Ascending aorta (tissue), 2 donors: ENCODE measurements at regions of chr10 and their contacts with region 1.

Region 1: GRCh38 chr10:3525832-3526449 is 259.1 kb downstream of the KLF6 start:
- DNase-seq: peak; percentile 39 to 81
- H3K4me3 ChIP-seq: no peak overlapping the region
- H3K27ac ChIP-seq: peak overlapping the region; percentile 38 to 63
- H3K4me1 ChIP-seq: peaks cover 0 to 21% of the 10 kb centered on the region in 2 donors
- H3K27me3 ChIP-seq: no peaks in the 10 kb centered on the region
- CTCF ChIP-seq: no peak

Region 2: GRCh38 chr10:3347413-3348182 is 178.3 kb before region 1 on chr10:
- intact Hi-C with region 1: no loop called
- DNase-seq: no peak
- H3K4me3 ChIP-seq: no peak overlapping the region
- H3K27ac ChIP-seq: no peak overlapping the region
- H3K4me1 ChIP-seq: no peaks in the 10 kb centered on the region
- H3K27me3 ChIP-seq: no peaks in the 10 kb centered on the region
- CTCF ChIP-seq: no peak

Region 3: DNA sequence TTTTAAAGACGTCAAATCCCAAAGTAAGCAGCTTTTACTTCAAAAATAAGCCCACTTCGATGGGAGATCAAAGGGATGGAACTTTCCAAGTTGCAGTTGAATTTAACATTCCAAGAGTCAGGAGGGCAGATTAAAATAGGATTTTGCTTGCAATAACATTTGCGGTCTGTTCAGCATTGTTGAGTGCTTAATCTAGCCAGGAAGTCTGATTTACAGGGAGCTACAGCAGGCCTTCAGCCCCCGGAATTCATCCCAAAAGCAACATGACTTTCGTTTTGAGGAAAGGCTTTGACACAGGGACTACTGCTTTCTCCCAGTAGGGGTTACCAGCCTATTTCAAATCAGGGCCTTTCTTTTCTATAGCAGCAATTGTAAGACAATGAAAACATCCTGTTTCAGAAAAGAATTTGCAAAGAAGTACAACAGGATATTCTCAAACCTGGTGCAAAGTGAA is 73.7 kb before region 1 on chr10:
- intact Hi-C with region 1: loop called (anchors 5 kb)
- DNase-seq: peak in 1 of 2 donors; percentile 71
- H3K4me3 ChIP-seq: peak overlapping the region in 1 of 2 donors; percentile 3
- H3K27ac ChIP-seq: peak overlapping the region; percentile 76 to 80
- H3K4me1 ChIP-seq: peaks cover 4 to 15% of the 10 kb centered on the region in 2 donors
- H3K27me3 ChIP-seq: no peaks in the 10 kb centered on the region
- CTCF ChIP-seq: peak; percentile 35 to 49 (median 49)

Region 4: GRCh38 chr10:3467052-3467951 is 58.6 kb before region 1 on chr10:
- intact Hi-C with region 1: loop called (anchors 5 kb)
- DNase-seq: peak; percentile 39 to 84
- H3K4me3 ChIP-seq: peak overlapping the region in 1 of 2 donors; percentile 34
- H3K27ac ChIP-seq: peak overlapping the region; percentile 69 to 91
- H3K4me1 ChIP-seq: peaks cover 0 to 30% of the 10 kb centered on the region in 2 donors
- H3K27me3 ChIP-seq: no peaks in the 10 kb centered on the region
- CTCF ChIP-seq: peak in 2 of 3 experiments; percentile 21 to 36

Region 5: GRCh38 chr10:3494131-3494837 is 31.7 kb before region 1 on chr10:
- intact Hi-C with region 1: loop called (anchors 5 kb)
- DNase-seq: no peak
- H3K4me3 ChIP-seq: peak overlapping the region in 1 of 2 donors; percentile 39
- H3K27ac ChIP-seq: peak overlapping the region; percentile 72 to 85
- H3K4me1 ChIP-seq: peaks cover 3 to 4% of the 10 kb centered on the region in 2 donors
- H3K27me3 ChIP-seq: no peaks in the 10 kb centered on the region
- CTCF ChIP-seq: no peak

Region 6: DNA sequence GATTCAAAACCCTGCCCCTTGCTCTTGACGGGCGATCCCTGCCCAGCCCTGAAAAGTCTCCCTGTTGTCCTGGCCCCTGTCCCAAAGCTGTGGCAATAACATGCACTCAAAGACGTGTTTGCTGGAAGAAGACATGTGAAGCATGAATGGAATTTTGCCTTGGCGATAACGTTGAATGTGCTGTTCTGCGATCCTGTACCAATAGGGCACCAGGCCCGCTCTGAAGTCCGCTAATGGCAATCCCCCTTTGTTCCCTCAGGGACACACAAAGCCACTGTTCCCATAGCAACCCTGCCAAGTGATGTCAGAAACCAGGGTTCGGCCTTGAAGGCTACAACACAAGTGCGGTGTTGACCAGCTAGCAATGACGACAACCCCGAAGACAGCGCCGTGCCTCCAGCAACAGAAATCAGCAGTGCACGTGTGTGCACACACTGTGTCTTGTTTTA is 25.5 kb before region 1 on chr10:
- intact Hi-C with region 1: loop called (anchors 1 kb)
- DNase-seq: peak in 1 of 2 donors; percentile 90
- H3K4me3 ChIP-seq: peak overlapping the region in 1 of 2 donors; percentile 20
- H3K27ac ChIP-seq: peak overlapping the region in 1 of 2 donors; percentile 17
- H3K4me1 ChIP-seq: peaks cover 0 to 10% of the 10 kb centered on the region in 2 donors
- H3K27me3 ChIP-seq: no peaks in the 10 kb centered on the region
- CTCF ChIP-seq: no peak

Region 7: DNA sequence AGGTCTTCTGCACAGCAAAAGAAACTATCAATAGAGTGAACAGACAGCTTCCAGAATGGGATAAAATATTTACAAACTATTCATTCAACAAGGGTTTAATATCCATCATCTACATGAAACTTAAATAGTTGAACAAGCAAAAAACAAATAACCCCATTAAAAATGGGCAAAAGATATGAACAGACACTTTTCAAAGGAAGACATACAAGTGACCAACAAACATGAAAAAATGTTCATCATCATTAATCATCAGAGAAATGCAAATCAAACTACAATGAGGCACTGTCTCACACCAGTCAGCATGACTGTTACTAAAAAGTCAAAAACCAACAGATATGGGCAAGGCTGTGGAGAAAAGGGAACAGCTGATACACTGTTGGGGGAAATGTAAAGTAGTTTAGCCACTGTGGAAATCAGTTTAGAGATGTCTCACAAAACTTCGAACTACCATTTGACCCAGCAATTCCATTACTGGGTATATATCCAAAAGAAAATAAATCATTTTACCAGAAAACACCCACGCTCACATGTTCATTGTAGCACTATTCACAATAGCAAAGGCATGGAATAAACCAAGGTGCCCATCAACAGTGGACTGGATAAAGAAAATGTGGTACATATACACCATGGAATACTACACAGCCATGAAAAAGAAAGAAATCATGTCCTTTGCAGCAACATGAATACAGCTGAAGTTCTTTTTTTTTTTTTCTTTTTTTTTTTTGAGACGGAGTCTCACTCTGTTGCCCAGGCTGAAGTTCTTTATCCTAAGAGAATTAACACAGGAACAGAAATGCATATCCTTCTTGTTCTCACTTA is 86.5 kb after region 1 on chr10:
- intact Hi-C with region 1: no loop called
- DNase-seq: no peak
- H3K4me3 ChIP-seq: no peak overlapping the region
- H3K27ac ChIP-seq: no peak overlapping the region
- H3K4me1 ChIP-seq: peaks cover 0 to 4% of the 10 kb centered on the region in 2 donors
- H3K27me3 ChIP-seq: no peaks in the 10 kb centered on the region
- CTCF ChIP-seq: no peak

Region 8: DNA sequence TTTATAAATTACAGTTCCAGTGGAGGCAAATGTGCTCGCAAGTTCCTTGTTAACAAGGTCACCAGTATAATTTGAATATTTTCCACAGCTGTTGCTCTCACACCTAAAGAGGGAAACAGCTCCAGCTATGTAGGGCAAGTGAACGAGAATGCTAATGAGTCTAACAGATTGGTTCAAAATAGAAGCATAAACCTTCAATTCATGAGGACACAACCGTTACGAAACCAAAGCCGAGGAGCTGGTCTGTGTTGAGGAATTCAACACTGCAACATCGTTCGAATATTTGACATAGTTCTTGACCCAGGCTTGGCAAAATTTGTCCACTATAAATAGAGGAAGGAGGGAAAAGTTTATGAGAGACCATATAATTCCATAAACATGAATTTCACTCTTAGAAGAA is 97.8 kb after region 1 on chr10:
- intact Hi-C with region 1: loop called (anchors 5 kb)
- DNase-seq: peak in 1 of 2 donors; percentile 75
- H3K4me3 ChIP-seq: peak overlapping the region in 1 of 2 donors; percentile 42
- H3K27ac ChIP-seq: peak overlapping the region; percentile 50 to 67
- H3K4me1 ChIP-seq: peaks cover 3 to 12% of the 10 kb centered on the region in 2 donors
- H3K27me3 ChIP-seq: no peaks in the 10 kb centered on the region
- CTCF ChIP-seq: no peak

Region 9: GRCh38 chr10:4219901-4220300 is 694.0 kb after region 1 on chr10:
- intact Hi-C with region 1: no loop called
- DNase-seq: no peak
- H3K4me3 ChIP-seq: no peak overlapping the region
- H3K27ac ChIP-seq: no peak overlapping the region
- H3K4me1 ChIP-seq: peaks cover 0 to 15% of the 10 kb centered on the region in 2 donors
- H3K27me3 ChIP-seq: no peaks in the 10 kb centered on the region
- CTCF ChIP-seq: no peak